Activated CD8-positive, alpha-beta T cell treated with anti-CD3 and anti-CD28 coated beads for 36 hours (primary cell): ENCODE measurements at regions of chr7 and their contacts with region 1.

Region 1: DNA sequence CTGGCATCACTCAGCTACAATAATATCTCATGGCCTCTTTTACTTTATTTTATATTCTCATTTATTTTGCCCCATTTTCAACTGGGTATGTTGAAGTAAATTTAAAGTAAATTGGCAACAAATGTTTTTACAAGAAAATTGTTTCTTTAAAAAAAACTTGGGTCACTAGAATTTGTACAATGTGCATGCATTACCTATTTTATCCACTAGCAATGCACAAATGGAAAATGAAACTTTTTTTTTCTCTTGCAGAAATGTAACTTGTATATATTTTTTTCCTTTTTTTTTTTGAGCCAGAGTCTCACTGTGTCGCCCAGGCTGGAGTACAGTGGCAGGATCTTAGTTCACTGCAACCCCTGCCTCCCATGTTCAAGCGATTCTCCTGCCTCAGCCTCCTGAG is 10.3 kb upstream of the H2AZ2 start:
- DNase-seq: no peak
- ATAC-seq: no peak
- H3K4me3 Mint-ChIP-seq: no peak overlapping the region
- H3K27ac Mint-ChIP-seq: no peak overlapping the region
- H3K4me1 Mint-ChIP-seq: peaks cover 21% of the 10 kb centered on the region
- H3K27me3 Mint-ChIP-seq: peaks cover 3% of the 10 kb centered on the region
- CTCF ChIP-seq: peak; percentile 57

Region 2: DNA sequence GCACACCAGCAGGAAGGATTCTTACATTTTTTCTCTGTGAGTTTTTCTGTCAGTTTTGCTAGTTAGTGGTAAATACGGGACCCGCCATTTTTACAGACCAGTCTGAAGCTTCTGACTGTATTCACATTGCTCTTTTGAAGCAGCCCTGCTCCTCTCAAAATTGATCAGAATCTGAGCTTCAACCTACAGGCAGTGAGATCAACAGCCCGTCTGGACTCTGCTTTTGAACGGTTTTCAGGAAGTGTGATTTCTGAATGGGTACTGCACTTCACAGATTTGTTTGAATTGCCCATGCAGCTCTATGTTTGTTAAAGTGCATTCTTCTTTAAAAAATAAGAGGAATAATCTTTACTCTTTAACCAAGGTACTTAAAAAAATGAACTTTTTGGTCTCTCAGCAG is 18.2 kb after region 1 on chr7:
- CTCF ChIA-PET with region 1: interaction called, 70 read pairs
- POLR2A ChIA-PET with region 1: interaction called, 5 read pairs
- intact Hi-C with region 1: no loop called
- DNase-seq: no peak
- ATAC-seq: no peak
- H3K4me3 Mint-ChIP-seq: no peak overlapping the region
- H3K27ac Mint-ChIP-seq: no peak overlapping the region
- H3K4me1 Mint-ChIP-seq: peaks cover 21% of the 10 kb centered on the region
- H3K27me3 Mint-ChIP-seq: no peaks in the 10 kb centered on the region
- CTCF ChIP-seq: no peak

Region 3: GRCh38 chr7:44894888-44895580 is 36.9 kb after region 1 on chr7:
- CTCF ChIA-PET with region 1: interaction called, 14 read pairs
- POLR2A ChIA-PET with region 1: no interaction called
- intact Hi-C with region 1: no loop called
- DNase-seq: no peak
- ATAC-seq: peak; percentile 22
- H3K4me3 Mint-ChIP-seq: no peak overlapping the region
- H3K27ac Mint-ChIP-seq: peak overlapping the region; percentile 22
- H3K4me1 Mint-ChIP-seq: peaks cover 33% of the 10 kb centered on the region
- H3K27me3 Mint-ChIP-seq: no peaks in the 10 kb centered on the region
- CTCF ChIP-seq: no peak

Region 4: GRCh38 chr7:44921607-44922359 is 63.6 kb after region 1 on chr7:
- CTCF ChIA-PET with region 1: interaction called, 199 read pairs
- POLR2A ChIA-PET with region 1: interaction called, 5 read pairs
- intact Hi-C with region 1: loop called (anchors 1 kb)
- DNase-seq: peak; percentile 99
- ATAC-seq: peak; percentile 99
- H3K4me3 Mint-ChIP-seq: no peak overlapping the region
- H3K27ac Mint-ChIP-seq: peak overlapping the region; percentile 63
- H3K4me1 Mint-ChIP-seq: peaks cover 16% of the 10 kb centered on the region
- H3K27me3 Mint-ChIP-seq: peaks cover under 1% of the 10 kb centered on the region
- CTCF ChIP-seq: peak; percentile 88

Region 5: GRCh38 chr7:45035893-45036292 is 177.7 kb after region 1 on chr7:
- CTCF ChIA-PET with region 1: no interaction called
- POLR2A ChIA-PET with region 1: no interaction called
- intact Hi-C with region 1: no loop called
- DNase-seq: peak; percentile 39
- ATAC-seq: peak; percentile 35
- H3K4me3 Mint-ChIP-seq: peak overlapping the region; percentile 32
- H3K27ac Mint-ChIP-seq: peak overlapping the region; percentile 77
- H3K4me1 Mint-ChIP-seq: peaks cover 70% of the 10 kb centered on the region
- H3K27me3 Mint-ChIP-seq: no peaks in the 10 kb centered on the region
- CTCF ChIP-seq: no peak